PC-3 (cell line): ENCODE measurements at regions of chr3 and their contacts with region 1.

Region 1: DNA sequence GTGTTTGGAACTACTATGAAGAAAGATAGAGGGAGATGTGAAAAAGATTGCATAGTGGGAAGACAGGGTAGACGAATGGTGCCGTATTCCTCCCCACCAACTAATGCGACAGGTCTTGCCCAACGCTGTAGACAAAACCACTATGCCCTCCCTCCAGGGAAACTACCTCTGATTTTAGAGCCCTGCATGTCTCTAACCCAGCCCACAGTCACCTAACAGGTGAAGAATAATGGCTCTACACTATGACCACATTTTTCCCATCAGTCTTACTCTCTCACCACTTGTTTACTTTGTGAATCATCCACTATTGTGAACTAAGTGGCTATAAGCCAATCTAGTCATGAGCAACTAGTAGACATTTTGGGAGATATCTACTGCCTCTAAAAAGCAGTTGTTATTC is 108.1 kb upstream of the UBE2E2 start:
- DNase-seq: peak; percentile 97
- ATAC-seq: peak; percentile 91
- H3K4me3 ChIP-seq: no peak overlapping the region
- H3K27ac ChIP-seq: no peak overlapping the region
- H3K4me1 ChIP-seq: peaks cover 23% of the 10 kb centered on the region
- H3K27me3 ChIP-seq: no peaks in the 10 kb centered on the region
- CTCF ChIP-seq: no peak

Region 2: GRCh38 chr3:22129091-22129490 is 965.9 kb before region 1 on chr3:
- CTCF ChIA-PET with region 1: no interaction called
- POLR2A ChIA-PET with region 1: no interaction called
- intact Hi-C with region 1: no loop called
- DNase-seq: no peak
- ATAC-seq: no peak
- H3K4me3 ChIP-seq: no peak overlapping the region
- H3K27ac ChIP-seq: no peak overlapping the region
- H3K4me1 ChIP-seq: no peaks in the 10 kb centered on the region
- H3K27me3 ChIP-seq: no peaks in the 10 kb centered on the region
- CTCF ChIP-seq: no peak

Region 3: DNA sequence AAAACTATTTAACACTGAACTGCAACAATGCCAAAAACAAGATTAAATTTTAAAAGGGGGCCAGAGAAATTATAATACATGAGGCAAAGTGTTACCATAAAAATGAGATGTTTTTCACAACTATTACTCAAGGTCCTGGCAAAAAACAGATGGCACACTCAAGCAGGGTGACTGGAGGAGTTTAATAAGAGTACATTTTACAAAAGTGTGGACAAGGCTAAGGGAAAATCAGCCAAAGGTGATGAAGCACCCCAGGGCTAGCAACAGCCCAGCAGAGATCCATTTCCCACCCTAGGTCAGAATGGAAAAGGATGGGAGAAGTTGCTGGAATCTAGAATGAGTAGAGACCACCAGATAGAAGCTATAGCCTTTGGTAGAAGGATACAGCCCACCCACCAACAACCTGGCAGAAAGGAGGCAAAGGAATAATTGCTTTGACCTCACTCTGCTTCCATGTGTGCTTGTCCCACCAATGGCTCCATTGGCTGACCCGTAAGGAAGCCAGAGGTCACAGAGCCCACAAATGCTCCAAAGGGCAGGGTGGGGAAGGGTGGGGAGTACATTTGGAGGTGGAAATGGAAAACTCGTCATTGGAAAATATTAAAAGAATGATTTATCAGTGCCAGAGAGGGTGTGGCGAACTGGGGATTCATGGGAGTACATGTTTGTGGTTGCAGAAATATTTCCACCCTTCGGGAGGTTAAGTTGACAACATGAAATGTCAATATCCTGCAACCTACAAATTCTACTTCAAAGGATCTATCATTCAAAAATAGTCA is 52.9 kb before region 1 on chr3:
- CTCF ChIA-PET with region 1: no interaction called
- POLR2A ChIA-PET with region 1: no interaction called
- intact Hi-C with region 1: no loop called
- DNase-seq: peak; percentile 87
- ATAC-seq: peak; percentile 80
- H3K4me3 ChIP-seq: no peak overlapping the region
- H3K27ac ChIP-seq: peak overlapping the region; percentile 23
- H3K4me1 ChIP-seq: peaks cover 20% of the 10 kb centered on the region
- H3K27me3 ChIP-seq: no peaks in the 10 kb centered on the region
- CTCF ChIP-seq: no peak

Region 4: DNA sequence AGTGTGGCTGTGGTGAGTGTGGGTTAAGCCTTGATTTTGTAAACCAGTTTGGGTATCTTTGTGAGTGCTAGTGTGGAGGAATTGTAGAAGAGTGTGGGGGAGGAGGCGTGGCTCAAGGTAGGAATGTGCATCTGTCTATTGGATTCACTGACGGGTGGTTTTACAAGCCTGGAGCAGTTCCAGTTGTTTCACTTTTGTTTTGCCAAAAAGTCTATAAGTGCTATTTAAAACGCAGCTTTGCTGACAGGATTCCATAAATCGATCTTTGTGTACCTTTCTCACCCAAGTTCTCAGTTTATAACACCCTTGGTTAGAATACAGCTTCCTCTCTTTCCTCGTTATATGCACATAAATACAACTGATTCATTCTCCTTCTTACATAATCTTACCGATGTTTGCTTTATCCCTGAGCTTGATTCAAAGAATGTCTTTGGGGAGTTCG is 15.1 kb before region 1 on chr3:
- CTCF ChIA-PET with region 1: no interaction called
- POLR2A ChIA-PET with region 1: no interaction called
- intact Hi-C with region 1: loop called (anchors 2 kb)
- DNase-seq: peak; percentile 86
- ATAC-seq: peak; percentile 85
- H3K4me3 ChIP-seq: peak overlapping the region; percentile 57
- H3K27ac ChIP-seq: no peak overlapping the region
- H3K4me1 ChIP-seq: peaks cover 13% of the 10 kb centered on the region
- H3K27me3 ChIP-seq: no peaks in the 10 kb centered on the region
- CTCF ChIP-seq: no peak

Region 5: DNA sequence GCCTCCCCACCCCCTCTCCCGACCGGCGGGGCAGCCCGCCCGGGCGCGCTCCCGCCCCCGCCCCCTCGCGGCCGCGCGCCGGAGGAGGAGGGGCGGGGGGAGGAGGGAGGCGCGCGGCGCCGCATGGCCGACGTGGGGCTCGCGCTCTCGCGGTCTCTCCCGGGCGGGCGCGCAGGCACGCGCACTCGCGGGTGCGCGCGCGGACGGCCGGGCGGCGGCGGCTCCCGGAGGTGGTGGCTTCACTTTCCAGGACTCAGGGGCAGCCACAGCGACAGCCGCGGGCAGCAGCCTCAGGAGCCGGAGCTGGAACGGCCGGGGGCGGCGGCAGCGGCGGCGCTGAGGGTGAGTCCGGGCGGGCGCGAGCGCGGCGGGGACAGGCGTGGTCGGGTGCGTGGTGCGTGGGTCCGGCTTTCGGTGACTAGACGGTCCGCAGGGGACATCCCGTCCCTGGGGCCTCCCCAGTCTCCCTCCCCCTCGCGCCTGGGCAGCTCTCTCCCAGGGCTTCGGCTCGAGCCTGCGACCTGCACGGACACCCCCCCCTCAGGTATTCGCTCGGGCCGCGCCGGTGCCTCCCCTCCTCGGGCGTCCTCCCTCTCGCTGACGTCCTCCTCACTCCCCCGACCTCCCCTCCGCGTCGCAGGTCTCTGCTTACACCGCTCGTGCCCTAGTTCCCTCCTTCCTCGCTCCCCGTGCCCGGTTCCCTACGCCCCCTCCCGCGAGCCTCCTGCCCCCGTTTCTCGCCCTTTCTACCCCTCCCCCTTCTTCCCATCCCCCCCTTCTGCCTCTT is 108.1 kb after region 1 on chr3 and contains the start of gene UBE2E2:
- CTCF ChIA-PET with region 1: no interaction called
- POLR2A ChIA-PET with region 1: no interaction called
- intact Hi-C with region 1: loop called (anchors 5 kb)
- DNase-seq: peak; percentile 82
- ATAC-seq: peak; percentile 72
- H3K4me3 ChIP-seq: peak within 1 kb of the TSS; percentile 100
- H3K27ac ChIP-seq: peak within 1 kb of the TSS; percentile 52
- H3K4me1 ChIP-seq: peaks cover 12% of the 10 kb centered on the region
- H3K27me3 ChIP-seq: no peaks in the 10 kb centered on the region
- CTCF ChIP-seq: no peak
- total RNA-seq, gene UBE2E2: 25.6 and 30.9 TPM in 2 replicates